Spleen (tissue), 13 donors: ENCODE measurements at regions of chr22 and their contacts with region 1.

Region 1: DNA sequence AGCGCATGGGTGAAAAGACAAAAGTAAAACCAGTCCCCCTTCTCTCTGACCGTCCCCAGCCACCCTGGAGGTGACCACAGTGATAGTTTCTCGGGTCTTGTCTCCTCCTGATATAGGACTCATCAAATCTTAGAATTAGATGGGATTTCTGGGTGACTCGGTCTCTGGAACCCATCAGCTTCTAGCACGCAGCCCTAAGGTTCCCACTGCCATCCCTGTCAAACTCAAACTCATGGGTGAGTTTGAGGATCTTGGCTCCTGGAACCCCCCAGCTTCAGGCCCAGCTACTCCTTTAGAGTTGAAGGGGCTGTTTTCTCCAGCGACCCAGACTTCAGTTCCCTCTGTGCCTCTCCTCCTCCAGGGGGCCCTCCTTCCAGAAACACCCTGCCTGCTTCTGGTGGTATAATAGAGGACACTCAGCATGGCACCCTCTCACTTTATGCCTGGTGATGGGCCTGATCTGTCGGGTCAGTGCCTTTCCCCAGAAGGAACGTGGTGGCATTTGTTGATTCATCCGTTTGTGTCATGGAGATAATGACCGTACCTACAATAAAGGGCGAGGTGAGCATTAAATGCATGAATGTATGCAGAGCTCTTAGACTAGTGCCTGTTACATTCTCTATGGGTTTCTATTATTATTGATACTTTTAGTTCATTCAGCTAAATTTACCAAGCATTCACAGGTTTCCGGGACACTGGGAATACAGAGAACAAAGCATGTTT is 31.7 kb downstream of the MCM5 start:
- DNase-seq: no peak
- H3K4me3 ChIP-seq: no peak overlapping the region
- H3K27ac ChIP-seq: peak overlapping the region in 5 of 8 donors; percentile 8 to 37 (median 22)
- H3K4me1 ChIP-seq: peaks cover 0 to 14% (median 2%) of the 10 kb centered on the region in 6 donors
- H3K27me3 ChIP-seq: no peaks in the 10 kb centered on the region
- CTCF ChIP-seq: no peak
- POLR2A ChIP-seq: no peak

Region 2: GRCh38 chr22:35076630-35077029 is 355.0 kb before region 1 on chr22:
- intact Hi-C with region 1: no loop called
- DNase-seq: no peak
- H3K4me3 ChIP-seq: no peak overlapping the region
- H3K27ac ChIP-seq: no peak overlapping the region
- H3K4me1 ChIP-seq: no peaks in the 10 kb centered on the region
- H3K27me3 ChIP-seq: peaks cover 0 to 32% (median 0%) of the 10 kb centered on the region in 7 donors
- CTCF ChIP-seq: no peak
- POLR2A ChIP-seq: no peak

Region 3: GRCh38 chr22:35582861-35583670 is 151.4 kb after region 1 on chr22:
- intact Hi-C with region 1: loop called (anchors 2 kb)
- DNase-seq: peak; percentile 84
- H3K4me3 ChIP-seq: no peak overlapping the region
- H3K27ac ChIP-seq: no peak overlapping the region
- H3K4me1 ChIP-seq: peaks cover 0 to 10% (median 6%) of the 10 kb centered on the region in 6 donors
- H3K27me3 ChIP-seq: no peaks in the 10 kb centered on the region
- CTCF ChIP-seq: peak; percentile 76 to 97 (median 92)
- POLR2A ChIP-seq: no peak